ENCODE measurements at regions of chr19 and their contacts with region 1.

Region 1: DNA sequence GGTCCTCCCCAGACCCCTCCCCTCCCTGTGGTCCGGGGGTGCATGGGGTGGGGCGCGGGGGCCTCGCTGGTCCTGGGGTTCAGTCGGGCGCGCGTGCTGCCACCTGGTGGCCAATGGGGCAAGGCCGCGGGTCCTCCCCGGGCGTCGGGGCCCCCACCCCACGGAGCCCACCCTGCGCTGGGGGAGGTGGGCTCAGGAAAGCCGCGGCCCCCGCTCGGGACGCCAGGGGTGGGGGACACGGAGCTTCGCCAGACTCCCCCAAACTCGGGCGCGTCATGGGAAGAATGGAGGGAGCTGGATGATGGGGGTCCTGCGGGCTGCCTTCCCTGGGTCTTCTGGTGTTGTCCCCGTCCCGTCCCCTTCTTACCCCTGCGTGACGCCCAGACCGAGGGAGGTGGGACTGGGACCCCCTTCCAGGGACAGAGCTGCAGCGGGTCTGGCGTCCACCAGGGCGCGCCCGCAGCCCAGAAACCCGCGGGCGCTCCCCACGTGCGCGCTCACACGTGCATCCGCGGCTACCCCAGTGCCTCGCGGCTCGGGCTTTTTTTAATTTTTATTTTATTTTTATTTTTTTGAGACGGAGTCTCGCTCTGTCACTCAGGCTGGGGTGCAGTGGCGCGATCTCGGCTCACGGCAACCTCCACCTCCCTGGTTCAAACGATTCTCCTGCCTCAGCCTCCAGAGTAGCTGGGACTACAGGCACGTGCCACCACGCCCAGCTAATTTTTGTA is 19.8 kb upstream of the TCF3 start:
- DNase-seq: peak; percentile 47
- ATAC-seq: peak; percentile 71
- H3K4me3 ChIP-seq: peak overlapping the region; percentile 60
- H3K27ac ChIP-seq: no peak overlapping the region
- H3K4me1 ChIP-seq: no peaks in the 10 kb centered on the region; the same call in 1 of the 2 replicates
- H3K27me3 ChIP-seq: peaks cover 13% of the 10 kb centered on the region
- CTCF ChIP-seq: peak; percentile 74

Region 2: GRCh38 chr19:1560286-1560882 is 111.8 kb before region 1 on chr19:
- CTCF ChIA-PET with region 1: no interaction called
- POLR2A ChIA-PET with region 1: no interaction called
- intact Hi-C with region 1: no loop called
- DNase-seq: no peak
- ATAC-seq: no peak
- H3K4me3 ChIP-seq: no peak overlapping the region
- H3K27ac ChIP-seq: no peak overlapping the region
- H3K4me1 ChIP-seq: no peaks in the 10 kb centered on the region
- H3K27me3 ChIP-seq: no peaks in the 10 kb centered on the region
- CTCF ChIP-seq: no peak

Region 3: DNA sequence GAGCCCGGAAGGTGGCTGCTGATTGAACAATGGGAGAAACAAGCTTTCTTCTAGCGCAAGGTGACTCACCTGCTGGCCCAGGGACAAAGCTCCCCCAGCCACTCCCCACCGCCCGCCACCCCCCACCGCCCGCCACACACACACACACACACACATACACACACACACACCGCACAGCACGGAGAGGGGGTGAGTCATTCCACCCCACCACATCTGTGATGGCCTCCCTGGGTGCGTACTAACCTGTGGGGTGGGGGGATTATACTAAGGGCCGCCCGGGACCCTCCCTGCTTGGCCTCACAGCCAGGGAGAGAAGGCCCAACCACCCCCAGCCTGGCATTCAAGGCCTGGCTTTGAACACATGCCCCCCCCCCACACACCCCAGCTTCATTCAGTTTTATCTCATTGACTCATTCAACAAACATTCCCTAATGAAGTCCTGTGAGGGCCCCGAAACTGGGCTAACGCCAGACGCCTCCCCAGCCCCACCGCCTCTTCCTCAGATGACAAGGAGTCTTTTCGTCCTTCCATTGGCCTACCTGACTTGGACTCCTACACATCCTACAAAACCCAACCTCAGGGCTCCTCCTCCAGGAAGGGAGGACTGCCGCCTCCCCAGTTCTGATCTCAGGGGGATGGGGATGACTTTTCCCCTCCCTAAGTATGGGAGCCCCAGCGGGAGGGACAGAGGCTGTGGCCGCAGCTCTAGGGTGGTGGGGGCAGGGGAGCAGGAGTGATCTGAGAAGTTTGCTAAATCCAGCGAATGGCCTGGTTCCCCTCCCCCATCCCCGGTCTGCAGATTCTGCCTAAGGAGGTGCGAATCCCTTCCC is 75.3 kb after region 1 on chr19:
- CTCF ChIA-PET with region 1: interaction called, 5 read pairs
- POLR2A ChIA-PET with region 1: interaction called, 6 read pairs
- intact Hi-C with region 1: loop called (anchors 5 kb)
- DNase-seq: peak; percentile 97
- ATAC-seq: peak; percentile 60
- H3K4me3 ChIP-seq: peak overlapping the region; percentile 70
- H3K27ac ChIP-seq: peak overlapping the region; percentile 99
- H3K4me1 ChIP-seq: peaks cover 42% of the 10 kb centered on the region
- H3K27me3 ChIP-seq: 0 out of 2 replicates have a peak, but pooled peaks cover 4% of the 10 kb centered on the region
- CTCF ChIP-seq: no peak

Region 4: GRCh38 chr19:1774999-1775772 is 103.0 kb after region 1 on chr19:
- CTCF ChIA-PET with region 1: interaction called, 4 read pairs
- POLR2A ChIA-PET with region 1: no interaction called
- intact Hi-C with region 1: loop called (anchors 5 kb)
- DNase-seq: no peak
- ATAC-seq: no peak; the same call in 1 of the 2 replicates
- H3K4me3 ChIP-seq: no peak overlapping the region
- H3K27ac ChIP-seq: no peak overlapping the region
- H3K4me1 ChIP-seq: peaks cover 12% of the 10 kb centered on the region
- H3K27me3 ChIP-seq: 0 out of 2 replicates have a peak, but pooled peaks cover 12% of the 10 kb centered on the region
- CTCF ChIP-seq: peak; percentile 70

Measured in PC-3 (cell line).